ENCODE measurements at regions of chr5 and their contacts with region 1.

Region 1: GRCh38 chr5:79702606-79703382 is 13.2 kb downstream of the CMYA5 start:
- DNase-seq: peak; percentile 60
- H3K27ac ChIP-seq: no peak overlapping the region
- CTCF ChIP-seq: peak; percentile 50

Region 2: DNA sequence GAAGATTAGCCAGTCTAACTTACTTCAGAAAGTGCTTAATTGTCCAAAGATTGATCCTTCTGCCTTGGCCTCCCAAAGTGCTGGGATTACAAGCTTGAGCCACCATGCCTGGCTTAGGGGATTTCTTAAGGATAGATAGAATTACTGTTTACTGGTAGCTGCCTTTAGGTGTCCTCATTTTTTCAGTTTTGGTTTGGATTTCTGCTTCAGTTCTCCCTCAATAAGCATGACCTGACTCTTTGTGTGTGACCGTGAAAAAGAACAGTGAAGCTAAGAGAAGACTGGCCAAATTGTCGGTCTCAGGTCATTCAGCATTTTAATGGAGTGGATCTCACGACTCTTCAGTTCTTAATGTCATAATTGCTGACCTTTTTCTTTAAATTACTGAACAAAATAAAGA is 36.0 kb before region 1 on chr5:
- CTCF ChIA-PET with region 1: no interaction called
- POLR2A ChIA-PET with region 1: no interaction called
- DNase-seq: no peak
- H3K27ac ChIP-seq: no peak overlapping the region
- CTCF ChIP-seq: no peak

Region 3: GRCh38 chr5:79689541-79690466 is 13.0 kb before region 1 on chr5 and contains the start of gene CMYA5:
- CTCF ChIA-PET with region 1: interaction called, 10 read pairs
- POLR2A ChIA-PET with region 1: no interaction called
- DNase-seq: peak; percentile 89
- H3K27ac ChIP-seq: peak within 1 kb of the TSS; percentile 34; the same call in 1 of the 2 replicates
- CTCF ChIP-seq: no peak

Region 4: DNA sequence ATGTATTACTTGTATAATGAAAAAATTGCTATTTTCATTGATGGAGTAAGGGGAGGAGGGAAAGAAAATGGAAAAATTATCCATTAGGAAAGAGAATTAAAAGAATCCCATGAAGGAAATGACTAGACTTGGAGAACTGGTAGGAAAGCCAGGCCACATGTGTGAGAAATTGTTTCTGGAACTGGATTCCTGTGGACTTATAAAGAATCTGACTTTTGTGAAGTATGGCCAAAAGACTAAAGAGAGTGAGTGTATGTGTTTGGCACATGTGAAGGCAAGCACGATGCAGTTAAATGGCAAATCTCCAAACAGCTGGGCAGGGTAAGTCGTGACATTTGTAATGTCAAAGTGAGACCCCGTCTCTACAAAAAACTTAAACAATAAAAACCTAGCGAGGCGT is 198.8 kb after region 1 on chr5:
- CTCF ChIA-PET with region 1: no interaction called
- POLR2A ChIA-PET with region 1: no interaction called
- DNase-seq: no peak
- H3K27ac ChIP-seq: no peak overlapping the region
- CTCF ChIP-seq: no peak

Measured in RWPE1 (cell line).